Panc1 (cell line): ENCODE measurements at regions of chr1 and their contacts with region 1.

Region 1: GRCh38 chr1:170967042-170967910 is 31.9 kb downstream of the MROH9 start:
- DNase-seq: peak; percentile 2
- ATAC-seq: no peak; the same call in 1 of the 2 replicates
- H3K4me3 ChIP-seq: no peak overlapping the region
- H3K27ac ChIP-seq: no peak overlapping the region
- H3K4me1 ChIP-seq: no peaks in the 10 kb centered on the region
- H3K27me3 ChIP-seq: no peaks in the 10 kb centered on the region
- CTCF ChIP-seq: peak; percentile 53; the same call in 1 of the 2 replicates

Region 2: DNA sequence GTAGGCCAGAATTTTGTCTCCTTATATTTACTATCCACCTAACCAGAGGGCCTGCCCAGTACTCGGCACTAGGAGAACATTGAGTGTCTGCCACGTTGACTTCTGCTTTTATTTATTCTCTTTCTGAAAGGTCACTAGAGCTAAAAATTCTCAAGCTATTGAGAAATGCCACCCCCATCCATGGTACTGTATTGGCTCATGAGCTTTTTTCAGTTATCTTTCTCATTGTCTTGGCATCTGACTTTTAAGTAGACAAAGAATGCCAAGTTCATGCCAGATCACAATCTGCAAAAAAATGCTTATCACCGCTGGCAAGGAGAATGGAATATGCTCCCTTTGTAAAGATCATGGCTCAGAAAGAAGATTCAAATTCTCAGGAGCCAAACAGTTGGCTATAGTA is 81.7 kb before region 1 on chr1:
- CTCF ChIA-PET with region 1: no interaction called
- POLR2A ChIA-PET with region 1: no interaction called
- in situ Hi-C with region 1: no loop called
- intact Hi-C with region 1: no loop called
- DNase-seq: no peak
- ATAC-seq: no peak
- H3K4me3 ChIP-seq: no peak overlapping the region
- H3K27ac ChIP-seq: no peak overlapping the region
- H3K4me1 ChIP-seq: no peaks in the 10 kb centered on the region; the same call in 1 of the 2 replicates
- H3K27me3 ChIP-seq: no peaks in the 10 kb centered on the region
- CTCF ChIP-seq: no peak

Region 3: GRCh38 chr1:171188388-171189266 is 221.4 kb after region 1 on chr1:
- CTCF ChIA-PET with region 1: no interaction called
- POLR2A ChIA-PET with region 1: no interaction called
- in situ Hi-C with region 1: no loop called
- intact Hi-C with region 1: loop called (anchors 2 kb)
- DNase-seq: peak; percentile 32
- ATAC-seq: peak; percentile 80; the same call in 1 of the 2 replicates
- H3K4me3 ChIP-seq: no peak overlapping the region
- H3K27ac ChIP-seq: no peak overlapping the region
- H3K4me1 ChIP-seq: no peaks in the 10 kb centered on the region
- H3K27me3 ChIP-seq: no peaks in the 10 kb centered on the region; the same call in 1 of the 2 replicates
- CTCF ChIP-seq: peak; percentile 82

Region 4: GRCh38 chr1:171226747-171227370 is 259.6 kb after region 1 on chr1:
- CTCF ChIA-PET with region 1: interaction called, 5 read pairs
- POLR2A ChIA-PET with region 1: no interaction called
- in situ Hi-C with region 1: no loop called
- intact Hi-C with region 1: loop called (anchors 2 kb)
- DNase-seq: peak; percentile 36
- ATAC-seq: peak; percentile 76
- H3K4me3 ChIP-seq: no peak overlapping the region
- H3K27ac ChIP-seq: no peak overlapping the region
- H3K4me1 ChIP-seq: no peaks in the 10 kb centered on the region
- H3K27me3 ChIP-seq: no peaks in the 10 kb centered on the region
- CTCF ChIP-seq: peak; percentile 69